HCT116 (cell line): ENCODE measurements at regions of chr14 and their contacts with region 1.

Region 1: GRCh38 chr14:103333754-103334643 is at the start of gene EIF5:
- DNase-seq: peak; percentile 96
- ATAC-seq: peak; percentile 92
- H3K4me3 ChIP-seq: peak within 1 kb of the TSS; percentile 86 to 89
- H3K27ac ChIP-seq: peak within 1 kb of the TSS; percentile 99
- H3K4me1 ChIP-seq: peaks cover 9 to 18% of the 10 kb centered on the region in 2 experiments; a peak in 3 of 4 replicates
- H3K27me3 ChIP-seq: no peaks in the 10 kb centered on the region
- CTCF ChIP-seq: 0 out of 6 replicates have a peak, but pooled peaks of 1 of the 3 experiments have one; percentile 19
- POLR2A ChIP-seq: peak; percentile 90
- RAD21 ChIP-seq: no peak
- total RNA-seq, gene EIF5: 238 TPM

Region 2: DNA sequence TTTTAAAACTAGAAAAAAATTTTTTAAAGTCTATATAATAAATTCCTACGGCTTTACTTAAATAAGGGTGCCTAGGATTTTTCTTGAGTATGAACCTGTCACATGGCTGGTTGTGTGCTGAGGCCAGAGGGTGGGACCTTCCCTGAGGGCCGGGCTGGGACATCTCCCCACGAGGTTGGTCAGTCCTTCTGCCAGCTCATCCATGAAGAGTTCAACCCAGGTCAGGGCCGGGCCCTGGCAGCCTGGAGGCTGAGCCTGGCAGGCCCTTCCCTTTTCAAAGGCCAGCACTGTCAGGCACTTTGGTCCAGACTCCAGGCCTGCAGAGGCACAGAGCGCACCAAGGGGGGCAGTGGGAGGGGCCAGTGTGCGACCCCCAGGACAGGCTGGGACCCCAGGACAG is 179.0 kb before region 1 on chr14:
- CTCF ChIA-PET with region 1: no interaction called
- POLR2A ChIA-PET with region 1: no interaction called
- RAD21 ChIA-PET with region 1: no interaction called
- intact Hi-C with region 1: no loop called
- DNase-seq: peak; percentile 61
- ATAC-seq: peak; percentile 99
- H3K4me3 ChIP-seq: peak overlapping the region in 1 of 2 experiments; percentile 15; a peak in 1 of 4 replicates
- H3K27ac ChIP-seq: peak overlapping the region; percentile 25; the same call in 1 of the 2 replicates
- H3K4me1 ChIP-seq: peaks cover 14 to 25% of the 10 kb centered on the region in 2 experiments
- H3K27me3 ChIP-seq: no peaks in the 10 kb centered on the region
- CTCF ChIP-seq: no peak
- POLR2A ChIP-seq: no peak
- RAD21 ChIP-seq: no peak

Region 3: DNA sequence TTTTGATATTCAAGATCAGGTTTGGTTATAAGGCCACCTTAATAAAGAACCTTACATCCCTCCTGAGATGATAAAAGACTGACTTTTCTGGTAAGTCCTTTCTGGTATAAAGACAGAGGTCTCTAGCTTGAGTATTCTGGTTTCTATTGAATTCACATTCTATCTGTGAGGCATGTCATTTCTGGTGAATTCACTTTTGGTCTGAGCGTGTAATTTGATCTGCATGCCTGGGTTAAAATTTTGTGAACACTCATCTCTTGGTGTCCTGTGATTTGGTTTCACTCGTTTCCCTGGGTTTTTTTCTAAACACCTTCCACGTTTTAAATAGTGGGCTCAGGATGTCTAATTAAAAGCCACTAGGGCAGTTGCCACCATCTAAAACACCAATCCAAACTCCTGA is 12.3 kb after region 1 on chr14:
- CTCF ChIA-PET with region 1: no interaction called
- POLR2A ChIA-PET with region 1: interaction called, 31 read pairs
- RAD21 ChIA-PET with region 1: no interaction called
- intact Hi-C with region 1: no loop called
- DNase-seq: no peak
- ATAC-seq: no peak
- H3K4me3 ChIP-seq: no peak overlapping the region
- H3K27ac ChIP-seq: no peak overlapping the region
- H3K4me1 ChIP-seq: no peaks in the 10 kb centered on the region
- H3K27me3 ChIP-seq: no peaks in the 10 kb centered on the region
- CTCF ChIP-seq: no peak
- POLR2A ChIP-seq: no peak
- RAD21 ChIP-seq: no peak

Region 4: GRCh38 chr14:103385152-103385993 is 51.4 kb after region 1 on chr14 and contains the start of gene MARK3:
- CTCF ChIA-PET with region 1: interaction called, 6 read pairs
- POLR2A ChIA-PET with region 1: interaction called, 8 read pairs
- RAD21 ChIA-PET with region 1: no interaction called
- intact Hi-C with region 1: loop called (anchors 5 kb)
- DNase-seq: peak; percentile 86
- ATAC-seq: peak; percentile 97
- H3K4me3 ChIP-seq: peak within 1 kb of the TSS; percentile 97 to 98
- H3K27ac ChIP-seq: peak within 1 kb of the TSS; percentile 87
- H3K4me1 ChIP-seq: peaks cover 10 to 26% of the 10 kb centered on the region in 2 experiments
- H3K27me3 ChIP-seq: no peaks in the 10 kb centered on the region
- CTCF ChIP-seq: peak in 2 of 3 experiments; percentile 21 to 29; a peak in 3 of 6 replicates
- POLR2A ChIP-seq: peak; percentile 78
- RAD21 ChIP-seq: no peak
- total RNA-seq, gene MARK3: 72.5 TPM